Right cardiac atrium (tissue), 5 donors: ENCODE measurements at regions of chr5 and their contacts with region 1.

Region 1: GRCh38 chr5:75236322-75237316 is at the start of gene ANKRD31:
- DNase-seq: peak; percentile 88 to 96 (median 95)
- ATAC-seq: peak; percentile 100
- H3K4me3 ChIP-seq: peak within 1 kb of the TSS; percentile 90
- H3K27ac ChIP-seq: peak within 1 kb of the TSS; percentile 51
- H3K4me1 ChIP-seq: no peaks in the 10 kb centered on the region
- H3K27me3 ChIP-seq: no peaks in the 10 kb centered on the region
- total RNA-seq, gene ANKRD31: 0.06 to 0.31 (median 0.14) TPM

Region 2: DNA sequence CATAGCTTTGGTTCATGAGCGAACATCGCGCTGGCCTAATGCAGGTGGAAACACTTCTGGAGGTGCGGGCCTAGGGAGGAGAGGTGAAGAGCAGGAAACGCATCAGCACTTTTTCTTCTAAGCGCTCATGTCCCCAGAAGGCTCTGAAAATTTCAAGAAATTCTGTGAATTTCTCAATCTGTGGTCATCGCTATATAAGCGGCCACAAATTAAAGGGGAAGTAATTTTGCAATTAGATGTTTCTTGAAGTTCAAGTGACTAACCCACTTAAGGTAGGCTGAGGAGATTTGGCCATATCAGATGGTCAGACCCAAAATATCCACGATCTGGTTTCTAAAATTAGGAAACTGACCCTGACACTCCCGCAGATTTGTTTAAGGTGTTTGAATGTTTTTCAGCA is 83.7 kb after region 1 on chr5:
- intact Hi-C with region 1: loop called in 1 of 4 experiments (anchors 10 kb)
- DNase-seq: no peak
- ATAC-seq: no peak
- H3K4me3 ChIP-seq: no peak overlapping the region
- H3K27ac ChIP-seq: no peak overlapping the region
- H3K4me1 ChIP-seq: no peaks in the 10 kb centered on the region
- H3K27me3 ChIP-seq: no peaks in the 10 kb centered on the region

Region 3: GRCh38 chr5:75336625-75337339 is 100.2 kb after region 1 on chr5 and contains the start of gene HMGCR:
- intact Hi-C with region 1: loop called in 2 of 4 experiments (anchors 2 to 10 kb)
- DNase-seq: peak; percentile 99
- ATAC-seq: peak; percentile 100
- H3K4me3 ChIP-seq: peak within 1 kb of the TSS; percentile 84
- H3K27ac ChIP-seq: peak within 1 kb of the TSS; percentile 82
- H3K4me1 ChIP-seq: no peaks in the 10 kb centered on the region
- H3K27me3 ChIP-seq: no peaks in the 10 kb centered on the region
- total RNA-seq, gene HMGCR: 8.1 to 16.0 (median 10.9) TPM

Region 4: GRCh38 chr5:75681125-75681830 is 444.7 kb after region 1 on chr5:
- intact Hi-C with region 1: loop called in 1 of 4 experiments (anchors 10 kb)
- DNase-seq: no peak
- ATAC-seq: no peak
- H3K4me3 ChIP-seq: no peak overlapping the region
- H3K27ac ChIP-seq: no peak overlapping the region
- H3K4me1 ChIP-seq: no peaks in the 10 kb centered on the region
- H3K27me3 ChIP-seq: no peaks in the 10 kb centered on the region